OCI-LY7 (cell line): ENCODE measurements at regions of chr12 and their contacts with region 1.

Region 1: GRCh38 chr12:57583008-57583831 is 7.8 kb upstream of the PIP4K2C start:
- DNase-seq: peak; percentile 94
- H3K4me3 ChIP-seq: no peak overlapping the region
- H3K27ac ChIP-seq: no peak overlapping the region
- H3K4me1 ChIP-seq: no peaks in the 10 kb centered on the region
- CTCF ChIP-seq: peak; percentile 100

Region 2: GRCh38 chr12:57390174-57390573 is 193.0 kb before region 1 on chr12:
- CTCF ChIA-PET with region 1: no interaction called
- POLR2A ChIA-PET with region 1: no interaction called
- intact Hi-C with region 1: no loop called
- DNase-seq: no peak
- H3K4me3 ChIP-seq: no peak overlapping the region
- H3K27ac ChIP-seq: no peak overlapping the region
- H3K4me1 ChIP-seq: no peaks in the 10 kb centered on the region
- CTCF ChIP-seq: no peak

Region 3: GRCh38 chr12:57614178-57614947 is 31.1 kb after region 1 on chr12:
- CTCF ChIA-PET with region 1: interaction called, 6 read pairs
- POLR2A ChIA-PET with region 1: interaction called, 3 read pairs
- intact Hi-C with region 1: loop called (anchors 2 kb)
- DNase-seq: peak; percentile 70
- H3K4me3 ChIP-seq: peak overlapping the region; percentile 1
- H3K27ac ChIP-seq: no peak overlapping the region
- H3K4me1 ChIP-seq: peaks cover 15% of the 10 kb centered on the region
- CTCF ChIP-seq: no peak

Region 4: GRCh38 chr12:57632694-57633477 is 49.7 kb after region 1 on chr12 and contains the start of gene B4GALNT1:
- CTCF ChIA-PET with region 1: interaction called, 5 read pairs
- POLR2A ChIA-PET with region 1: interaction called, 3 read pairs
- intact Hi-C with region 1: loop called (anchors 1 kb)
- DNase-seq: peak; percentile 78
- H3K4me3 ChIP-seq: peak within 1 kb of the TSS; percentile 58
- H3K27ac ChIP-seq: no peak within 1 kb of the TSS
- H3K4me1 ChIP-seq: no peaks in the 10 kb centered on the region
- CTCF ChIP-seq: peak; percentile 87
- total RNA-seq, gene B4GALNT1: 1.1 and 1.2 TPM in 2 replicates